Endothelial cell of umbilical vein (primary cell): ENCODE measurements at regions of chr18 and their contacts with region 1.

Region 1: GRCh38 chr18:55234366-55235093 is 275.3 kb upstream of the CCDC68 start:
- DNase-seq: peak; percentile 82
- H3K4me3 ChIP-seq: no peak overlapping the region
- H3K27ac ChIP-seq: peak overlapping the region; percentile 61
- H3K4me1 ChIP-seq: peaks cover 22% of the 10 kb centered on the region
- H3K27me3 ChIP-seq: no peaks in the 10 kb centered on the region
- CTCF ChIP-seq: peak; percentile 63 to 69
- POLR2A ChIP-seq: no peak

Region 2: DNA sequence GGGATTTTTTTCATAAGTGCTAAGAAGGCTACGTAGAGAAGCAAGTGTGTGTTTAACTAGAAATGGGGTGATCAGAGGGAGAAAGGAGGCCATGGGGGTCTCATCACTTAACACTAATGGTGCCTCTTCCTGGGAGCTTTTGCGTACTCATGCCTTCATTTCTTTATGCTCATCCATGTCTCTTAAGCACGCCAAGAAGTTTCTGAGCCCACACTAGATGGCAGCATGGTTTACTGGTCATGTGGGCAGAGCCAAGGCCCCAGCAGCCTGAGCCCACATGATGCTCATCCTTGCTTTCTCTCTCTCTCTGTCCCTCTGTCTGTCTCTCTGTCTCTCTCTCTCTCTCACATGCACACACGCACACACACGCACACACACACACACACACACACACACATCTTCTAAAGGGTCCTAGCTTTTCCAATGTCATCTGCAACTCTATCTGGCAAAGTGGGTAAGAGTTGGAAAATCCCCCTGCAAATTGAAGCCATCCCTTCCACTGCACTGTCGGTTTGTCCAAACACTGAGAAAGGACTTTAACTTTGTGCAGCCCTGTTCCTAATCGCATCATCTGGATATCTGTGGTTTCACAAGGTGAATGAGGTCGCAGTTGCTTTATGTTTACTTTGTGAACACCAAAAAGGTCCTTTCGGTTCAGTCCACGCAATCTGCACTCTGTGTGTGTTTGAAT is 138.1 kb before region 1 on chr18:
- CTCF ChIA-PET with region 1: interaction called, 13 read pairs
- POLR2A ChIA-PET with region 1: no interaction called
- dilution Hi-C with region 1: no loop called
- intact Hi-C with region 1: loop called (anchors 1 kb)
- DNase-seq: peak; percentile 64
- H3K4me3 ChIP-seq: no peak overlapping the region
- H3K27ac ChIP-seq: peak overlapping the region; percentile 80
- H3K4me1 ChIP-seq: peaks cover 39% of the 10 kb centered on the region
- H3K27me3 ChIP-seq: peaks cover 0 to 8% of the 10 kb centered on the region in 2 experiments
- CTCF ChIP-seq: peak; percentile 46 to 59
- POLR2A ChIP-seq: no peak

Region 3: DNA sequence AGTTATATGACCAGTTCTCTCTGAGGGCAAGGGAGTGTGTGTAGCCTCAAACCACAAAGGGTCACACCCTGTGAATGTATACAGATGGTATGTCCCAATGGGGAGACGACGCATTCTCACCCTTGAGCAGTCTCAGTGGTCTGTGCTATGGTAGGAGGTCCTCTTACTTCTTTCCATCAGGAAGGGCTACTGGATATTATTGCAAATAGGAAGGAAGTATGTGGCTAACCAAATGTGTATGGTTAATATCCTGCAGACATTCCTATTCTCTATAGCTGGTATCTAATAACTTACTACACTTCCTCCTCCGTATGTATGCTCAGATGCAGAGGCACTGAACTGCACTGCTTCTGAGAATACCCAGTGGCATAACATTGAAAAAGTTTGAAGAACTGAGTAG is 31.5 kb after region 1 on chr18:
- CTCF ChIA-PET with region 1: interaction called, 14 read pairs
- POLR2A ChIA-PET with region 1: no interaction called
- dilution Hi-C with region 1: no loop called
- intact Hi-C with region 1: loop called (anchors 1 kb)
- DNase-seq: peak; percentile 75
- H3K4me3 ChIP-seq: no peak overlapping the region
- H3K27ac ChIP-seq: peak overlapping the region; percentile 73
- H3K4me1 ChIP-seq: peaks cover 67% of the 10 kb centered on the region
- H3K27me3 ChIP-seq: no peaks in the 10 kb centered on the region
- CTCF ChIP-seq: no peak
- POLR2A ChIP-seq: peak; percentile 30

Region 4: DNA sequence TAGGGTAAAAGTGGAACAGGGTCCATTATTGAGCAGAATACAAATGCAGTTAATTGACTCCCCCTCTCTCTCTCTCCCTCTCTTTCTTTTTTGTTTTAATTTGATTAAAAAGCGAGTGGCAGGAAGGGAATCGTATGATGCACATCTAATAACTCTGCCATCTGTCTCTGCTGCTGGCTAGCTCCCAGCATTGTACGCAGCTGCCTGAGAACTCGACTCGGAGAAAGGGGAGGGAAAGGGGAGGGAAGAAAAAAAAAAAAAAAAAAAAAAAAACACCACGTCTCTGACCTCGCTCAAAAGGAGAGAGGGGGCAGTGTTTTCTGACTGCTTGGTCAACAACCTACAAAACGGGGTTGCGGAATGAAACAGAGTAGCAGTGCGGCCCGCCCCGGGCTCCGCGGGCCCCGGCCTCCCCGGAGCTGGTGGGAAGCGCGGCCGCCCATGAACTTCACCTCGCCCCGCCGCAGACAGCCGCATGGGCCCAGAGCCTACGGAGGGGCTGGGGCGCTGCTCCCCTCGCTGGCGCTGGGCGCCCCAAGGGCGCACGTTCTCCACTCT is 87.7 kb after region 1 on chr18:
- CTCF ChIA-PET with region 1: interaction called, 22 read pairs
- POLR2A ChIA-PET with region 1: no interaction called
- dilution Hi-C with region 1: no loop called
- intact Hi-C with region 1: loop called (anchors 2 kb)
- DNase-seq: peak; percentile 96
- H3K4me3 ChIP-seq: peak overlapping the region; percentile 28 to 89 (median 52)
- H3K27ac ChIP-seq: peak overlapping the region; percentile 82
- H3K4me1 ChIP-seq: peaks cover 66% of the 10 kb centered on the region
- H3K27me3 ChIP-seq: no peaks in the 10 kb centered on the region
- CTCF ChIP-seq: peak; percentile 4 to 20
- POLR2A ChIP-seq: no peak

Region 5: GRCh38 chr18:55343396-55344073 is 109.0 kb after region 1 on chr18:
- CTCF ChIA-PET with region 1: interaction called, 22 read pairs
- POLR2A ChIA-PET with region 1: no interaction called
- dilution Hi-C with region 1: no loop called
- intact Hi-C with region 1: loop called (anchors 1 kb)
- DNase-seq: peak; percentile 46
- H3K4me3 ChIP-seq: no peak overlapping the region
- H3K27ac ChIP-seq: no peak overlapping the region
- H3K4me1 ChIP-seq: peaks cover 26% of the 10 kb centered on the region
- H3K27me3 ChIP-seq: no peaks in the 10 kb centered on the region
- CTCF ChIP-seq: peak; percentile 9 to 24
- POLR2A ChIP-seq: no peak

Region 6: GRCh38 chr18:55390898-55391297 is 156.4 kb after region 1 on chr18:
- CTCF ChIA-PET with region 1: interaction called, 10 read pairs
- POLR2A ChIA-PET with region 1: no interaction called
- dilution Hi-C with region 1: no loop called
- intact Hi-C with region 1: loop called (anchors 5 kb)
- DNase-seq: no peak
- H3K4me3 ChIP-seq: no peak overlapping the region
- H3K27ac ChIP-seq: no peak overlapping the region
- H3K4me1 ChIP-seq: peaks cover 45% of the 10 kb centered on the region
- H3K27me3 ChIP-seq: no peaks in the 10 kb centered on the region
- CTCF ChIP-seq: no peak
- POLR2A ChIP-seq: no peak

Region 7: GRCh38 chr18:55781481-55781957 is 547.0 kb after region 1 on chr18:
- CTCF ChIA-PET with region 1: interaction called, 55 read pairs
- POLR2A ChIA-PET with region 1: no interaction called
- dilution Hi-C with region 1: no loop called
- intact Hi-C with region 1: loop called (anchors 1 kb)
- DNase-seq: peak; percentile 90
- H3K4me3 ChIP-seq: no peak overlapping the region
- H3K27ac ChIP-seq: peak overlapping the region; percentile 47
- H3K4me1 ChIP-seq: peaks cover 27% of the 10 kb centered on the region
- H3K27me3 ChIP-seq: no peaks in the 10 kb centered on the region
- CTCF ChIP-seq: peak; percentile 75 to 85
- POLR2A ChIP-seq: no peak

Region 8: DNA sequence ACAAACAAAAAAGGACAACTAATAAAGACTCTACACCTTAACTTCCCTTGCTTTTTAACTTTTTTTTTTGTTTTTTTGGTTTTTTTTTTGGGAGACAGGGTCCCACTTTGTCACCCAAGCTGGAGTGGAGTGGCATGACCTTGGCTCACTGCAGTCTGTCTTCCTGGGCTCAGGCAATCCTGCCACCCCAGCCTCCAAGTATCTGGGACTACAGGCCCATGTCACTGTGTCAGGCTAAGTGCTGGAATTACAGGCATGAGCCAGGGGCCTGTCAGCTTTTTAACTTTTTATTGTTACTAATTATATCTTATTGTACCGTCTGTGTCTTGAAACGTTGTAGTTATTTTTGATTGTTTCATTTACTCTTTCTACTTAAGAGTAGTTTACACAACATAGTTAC is 1442.1 kb after region 1 on chr18:
- CTCF ChIA-PET with region 1: no interaction called
- POLR2A ChIA-PET with region 1: no interaction called
- dilution Hi-C with region 1: no loop called
- intact Hi-C with region 1: no loop called
- DNase-seq: no peak
- H3K4me3 ChIP-seq: no peak overlapping the region
- H3K27ac ChIP-seq: no peak overlapping the region
- H3K4me1 ChIP-seq: peaks cover 4% of the 10 kb centered on the region
- H3K27me3 ChIP-seq: no peaks in the 10 kb centered on the region
- CTCF ChIP-seq: no peak
- POLR2A ChIP-seq: no peak